ENCODE measurements at regions of chr1 and their contacts with region 1.

Region 1: GRCh38 chr1:88180449-88181108 is 503.5 kb upstream of the PKN2 start:
- DNase-seq: peak; percentile 65 to 77 (median 71)
- H3K4me3 ChIP-seq: no peak overlapping the region
- H3K27ac ChIP-seq: no peak overlapping the region
- H3K4me1 ChIP-seq: peaks cover 2% of the 10 kb centered on the region
- H3K27me3 ChIP-seq: no peaks in the 10 kb centered on the region
- CTCF ChIP-seq: peak; percentile 71 to 78 (median 74)
- EP300 ChIP-seq: no peak
- POLR2A ChIP-seq: no peak

Region 2: GRCh38 chr1:88302843-88303486 is 122.4 kb after region 1 on chr1:
- intact Hi-C with region 1: loop called in 2 of 4 experiments (anchors 5 to 10 kb)
- DNase-seq: peak in 4 of 5 donors; percentile 12 to 21 (median 18)
- H3K4me3 ChIP-seq: no peak overlapping the region
- H3K27ac ChIP-seq: peak overlapping the region in 1 of 2 donors; percentile 40
- H3K4me1 ChIP-seq: peaks cover 2% of the 10 kb centered on the region
- H3K27me3 ChIP-seq: no peaks in the 10 kb centered on the region
- CTCF ChIP-seq: peak; percentile 21 to 53 (median 43)
- EP300 ChIP-seq: no peak
- POLR2A ChIP-seq: no peak